Calu3 (cell line): ENCODE measurements at regions of chr1 and their contacts with region 1.

Region 1: DNA sequence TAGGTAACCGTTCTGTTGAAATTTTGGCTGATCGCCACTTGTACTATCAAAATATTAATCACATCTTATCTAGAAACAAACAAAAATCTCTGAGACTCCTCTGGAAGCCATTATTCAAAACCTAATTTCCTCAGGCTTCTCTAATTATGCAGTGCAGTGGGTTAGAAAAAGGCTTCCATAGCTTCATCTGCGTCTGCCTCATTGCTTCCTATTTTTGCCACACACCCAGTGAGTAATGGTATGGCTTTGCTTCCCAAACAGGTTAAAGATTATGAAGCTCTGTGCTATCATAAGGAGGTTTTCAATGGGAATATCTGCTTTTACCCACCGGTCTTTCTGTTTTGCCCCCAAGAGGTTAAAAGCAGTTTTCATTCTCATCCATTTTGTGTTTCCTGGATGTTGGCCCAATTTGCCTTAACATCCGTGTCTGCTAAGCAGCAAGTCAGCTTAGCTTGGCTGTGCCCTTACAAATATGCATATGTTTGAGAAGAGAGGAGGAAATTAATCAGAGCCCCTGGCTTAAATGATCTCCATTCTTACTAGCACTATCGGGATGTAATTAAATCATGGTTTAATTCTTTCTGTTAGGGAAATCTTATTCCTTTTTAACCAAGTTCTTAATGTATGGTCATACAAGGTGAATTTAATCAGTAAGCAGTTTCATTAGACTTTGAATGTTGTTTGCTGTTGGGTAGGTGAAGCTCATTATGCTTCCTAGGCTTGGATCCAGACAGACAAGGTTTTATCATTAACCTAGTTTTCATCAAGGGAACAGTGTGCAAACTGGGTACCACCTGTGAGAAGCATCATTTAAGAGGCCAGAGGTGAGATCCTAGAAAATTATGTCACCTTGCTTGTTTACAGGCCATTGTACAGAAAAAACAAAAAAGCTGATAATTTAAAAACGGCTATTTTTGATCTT is 129.8 kb downstream of the RYR2 start:
- DNase-seq: no peak
- H3K4me3 Mint-ChIP-seq: no peak overlapping the region
- H3K27ac Mint-ChIP-seq: no peak overlapping the region
- H3K4me1 Mint-ChIP-seq: no peaks in the 10 kb centered on the region
- H3K27me3 Mint-ChIP-seq: no peaks in the 10 kb centered on the region
- CTCF ChIP-seq: no peak

Region 2: DNA sequence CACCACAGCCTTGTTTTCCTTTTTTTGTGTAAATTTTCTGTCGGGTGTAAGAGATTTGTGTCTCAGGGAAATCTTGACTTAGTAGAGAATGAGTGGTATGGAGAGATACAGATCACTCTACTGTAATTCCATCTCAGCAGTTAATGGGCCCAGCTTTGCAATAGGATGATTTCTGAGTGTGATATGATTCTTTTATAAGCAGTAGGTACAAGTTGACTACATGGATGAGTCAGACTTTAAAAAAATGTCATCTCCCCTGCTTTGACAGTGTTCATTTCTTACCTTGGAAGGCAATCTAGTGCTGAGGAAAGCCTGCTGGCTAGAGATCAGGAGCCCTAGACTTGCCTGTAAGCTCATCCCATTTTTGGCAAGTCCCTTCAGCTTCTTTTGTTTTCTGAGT is 132.1 kb after region 1 on chr1:
- CTCF ChIA-PET with region 1: no interaction called
- intact Hi-C with region 1: no loop called
- DNase-seq: no peak
- H3K4me3 Mint-ChIP-seq: no peak overlapping the region
- H3K27ac Mint-ChIP-seq: no peak overlapping the region
- H3K4me1 Mint-ChIP-seq: no peaks in the 10 kb centered on the region
- H3K27me3 Mint-ChIP-seq: no peaks in the 10 kb centered on the region
- CTCF ChIP-seq: no peak

Region 3: GRCh38 chr1:237570530-237570929 is 398.7 kb after region 1 on chr1:
- CTCF ChIA-PET with region 1: no interaction called
- intact Hi-C with region 1: loop called (anchors 10 kb)
- DNase-seq: no peak
- H3K4me3 Mint-ChIP-seq: no peak overlapping the region
- H3K27ac Mint-ChIP-seq: no peak overlapping the region
- H3K4me1 Mint-ChIP-seq: no peaks in the 10 kb centered on the region
- H3K27me3 Mint-ChIP-seq: no peaks in the 10 kb centered on the region
- CTCF ChIP-seq: no peak